Lower leg skin (tissue), 4 donors: ENCODE measurements at regions of chr22 and their contacts with region 1.

Region 1: DNA sequence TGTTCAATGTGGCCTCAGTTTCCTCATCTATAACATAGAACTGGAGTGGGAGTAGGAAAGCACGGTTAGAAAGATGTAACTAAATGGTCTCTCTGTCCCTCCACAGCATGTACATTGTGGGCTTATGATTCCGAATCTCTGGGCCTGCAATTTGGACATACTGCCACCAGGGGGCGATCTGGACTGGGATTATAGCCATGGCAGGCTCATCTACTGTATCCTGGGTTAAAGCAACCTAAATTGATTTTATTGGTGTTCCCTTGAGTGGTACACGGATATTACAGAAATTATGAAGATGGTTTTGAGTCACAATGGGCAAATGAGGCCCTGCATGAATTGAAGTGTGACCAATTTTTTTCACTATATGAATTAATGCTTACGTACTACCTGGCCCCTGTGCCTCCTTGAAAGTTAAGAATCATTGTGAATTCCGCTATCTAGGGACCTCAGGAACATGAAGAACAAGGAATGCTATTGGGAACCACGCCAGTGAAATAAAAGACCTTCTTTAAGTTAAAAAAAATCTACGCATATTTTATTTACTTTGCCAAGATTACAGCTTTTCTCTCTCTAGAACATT is 32.9 kb downstream of the TST start:
- DNase-seq: peak in 1 of 2 donors; percentile 63
- H3K4me3 ChIP-seq: no peak overlapping the region
- CTCF ChIP-seq: no peak
- POLR2A ChIP-seq: no peak

Region 2: GRCh38 chr22:36781656-36782627 is 204.4 kb before region 1 on chr22:
- intact Hi-C with region 1: loop called (anchors 10 kb)
- DNase-seq: peak; percentile 65 to 95
- H3K4me3 ChIP-seq: no peak overlapping the region
- CTCF ChIP-seq: peak in 1 of 3 donors; percentile 79
- POLR2A ChIP-seq: no peak

Region 3: GRCh38 chr22:37088108-37088605 is 101.8 kb after region 1 on chr22:
- intact Hi-C with region 1: no loop called
- DNase-seq: peak in 1 of 2 donors; percentile 30
- H3K4me3 ChIP-seq: no peak overlapping the region
- CTCF ChIP-seq: no peak
- POLR2A ChIP-seq: no peak